Activated B cell treated with CpG ODN at 0.5 μM for 24 hours (primary cell): ENCODE measurements at regions of chrX and their contacts with region 1.

Region 1: GRCh38 chrX:13734278-13735172 is at the starts of genes OFD1 and TRAPPC2:
- DNase-seq: peak; percentile 80
- ATAC-seq: peak; percentile 81
- H3K4me3 Mint-ChIP-seq: peak within 1 kb of the TSS; percentile 93
- H3K27ac Mint-ChIP-seq: peak within 1 kb of the TSS; percentile 92
- H3K4me1 Mint-ChIP-seq: peaks cover 60% of the 10 kb centered on the region
- H3K27me3 Mint-ChIP-seq: no peaks in the 10 kb centered on the region
- CTCF ChIP-seq: no peak
- total RNA-seq, gene OFD1: 57.3 and 61.4 TPM in 2 replicates
- total RNA-seq, gene TRAPPC2: 24.7 and 26.7 TPM in 2 replicates

Region 2: GRCh38 chrX:12955882-12956703 is 778.4 kb before region 1 on chrX:
- CTCF ChIA-PET with region 1: no interaction called
- POLR2A ChIA-PET with region 1: no interaction called
- intact Hi-C with region 1: loop called (anchors 5 kb)
- DNase-seq: no peak
- ATAC-seq: peak; percentile 45
- H3K4me3 Mint-ChIP-seq: peak overlapping the region; percentile 79
- H3K27ac Mint-ChIP-seq: peak overlapping the region; percentile 96
- H3K4me1 Mint-ChIP-seq: peaks cover 79% of the 10 kb centered on the region
- H3K27me3 Mint-ChIP-seq: no peaks in the 10 kb centered on the region
- CTCF ChIP-seq: no peak

Region 3: GRCh38 chrX:13646154-13646549 is 88.4 kb before region 1 on chrX:
- CTCF ChIA-PET with region 1: no interaction called
- POLR2A ChIA-PET with region 1: no interaction called
- intact Hi-C with region 1: no loop called
- DNase-seq: no peak
- ATAC-seq: no peak
- H3K4me3 Mint-ChIP-seq: no peak overlapping the region
- H3K27ac Mint-ChIP-seq: no peak overlapping the region
- H3K4me1 Mint-ChIP-seq: peaks cover 3% of the 10 kb centered on the region
- H3K27me3 Mint-ChIP-seq: no peaks in the 10 kb centered on the region
- CTCF ChIP-seq: no peak

Region 4: GRCh38 chrX:13658602-13659001 is 75.9 kb before region 1 on chrX:
- CTCF ChIA-PET with region 1: interaction called, 4 read pairs
- POLR2A ChIA-PET with region 1: interaction called, 12 read pairs
- intact Hi-C with region 1: loop called (anchors 1 kb)
- DNase-seq: no peak
- ATAC-seq: peak; percentile 37
- H3K4me3 Mint-ChIP-seq: no peak overlapping the region
- H3K27ac Mint-ChIP-seq: peak overlapping the region; percentile 46
- H3K4me1 Mint-ChIP-seq: peaks cover 14% of the 10 kb centered on the region
- H3K27me3 Mint-ChIP-seq: no peaks in the 10 kb centered on the region
- CTCF ChIP-seq: no peak

Region 5: GRCh38 chrX:13688958-13689740 is 45.4 kb before region 1 on chrX and contains the start of gene RAB9A:
- CTCF ChIA-PET with region 1: interaction called, 4 read pairs
- POLR2A ChIA-PET with region 1: interaction called, 39 read pairs
- intact Hi-C with region 1: loop called (anchors 1 kb)
- DNase-seq: peak; percentile 77
- ATAC-seq: peak; percentile 86
- H3K4me3 Mint-ChIP-seq: peak within 1 kb of the TSS; percentile 91
- H3K27ac Mint-ChIP-seq: peak within 1 kb of the TSS; percentile 89
- H3K4me1 Mint-ChIP-seq: peaks cover 61% of the 10 kb centered on the region
- H3K27me3 Mint-ChIP-seq: no peaks in the 10 kb centered on the region
- CTCF ChIP-seq: no peak
- total RNA-seq, gene RAB9A: 26.1 and 27.7 TPM in 2 replicates

Region 6: GRCh38 chrX:13721819-13722519 is 12.6 kb before region 1 on chrX:
- CTCF ChIA-PET with region 1: no interaction called
- POLR2A ChIA-PET with region 1: interaction called, 25 read pairs
- intact Hi-C with region 1: loop called (anchors 2 kb)
- DNase-seq: no peak
- ATAC-seq: peak; percentile 14
- H3K4me3 Mint-ChIP-seq: no peak overlapping the region
- H3K27ac Mint-ChIP-seq: peak overlapping the region; percentile 41
- H3K4me1 Mint-ChIP-seq: peaks cover 21% of the 10 kb centered on the region
- H3K27me3 Mint-ChIP-seq: no peaks in the 10 kb centered on the region
- CTCF ChIP-seq: no peak

Region 7: GRCh38 chrX:13759152-13759718 is 24.7 kb after region 1 on chrX:
- CTCF ChIA-PET with region 1: no interaction called
- POLR2A ChIA-PET with region 1: interaction called, 19 read pairs
- intact Hi-C with region 1: loop called (anchors 2 kb)
- DNase-seq: no peak
- ATAC-seq: peak; percentile 78
- H3K4me3 Mint-ChIP-seq: peak overlapping the region; percentile 32
- H3K27ac Mint-ChIP-seq: peak overlapping the region; percentile 83
- H3K4me1 Mint-ChIP-seq: peaks cover 57% of the 10 kb centered on the region
- H3K27me3 Mint-ChIP-seq: no peaks in the 10 kb centered on the region
- CTCF ChIP-seq: no peak